Spleen (tissue), 13 donors: ENCODE measurements at regions of chr6 and their contacts with region 1.

Region 1: GRCh38 chr6:125956506-125957390 is at the start of gene HINT3:
- DNase-seq: peak; percentile 100
- H3K4me3 ChIP-seq: peak within 1 kb of the TSS; percentile 64 to 91 (median 80)
- H3K27ac ChIP-seq: peak within 1 kb of the TSS; percentile 90 to 99 (median 97)
- H3K4me1 ChIP-seq: peaks cover 9 to 54% (median 36%) of the 10 kb centered on the region in 6 donors
- H3K27me3 ChIP-seq: peaks cover 0 to 9% (median 0%) of the 10 kb centered on the region in 7 donors
- CTCF ChIP-seq: peak; percentile 93 to 99 (median 98)
- POLR2A ChIP-seq: peak in 1 of 3 donors; percentile 37
- total RNA-seq, gene HINT3: 13.4 to 18.6 (median 16.0) TPM

Region 2: GRCh38 chr6:125779924-125780539 is 176.7 kb before region 1 on chr6:
- intact Hi-C with region 1: loop called (anchors 5 kb)
- DNase-seq: peak; percentile 90
- H3K4me3 ChIP-seq: peak overlapping the region; percentile 50 to 83 (median 60)
- H3K27ac ChIP-seq: peak overlapping the region; percentile 93 to 98 (median 96)
- H3K4me1 ChIP-seq: peaks cover 7 to 34% (median 14%) of the 10 kb centered on the region in 6 donors
- H3K27me3 ChIP-seq: no peaks in the 10 kb centered on the region
- CTCF ChIP-seq: peak in 10 of 11 experiments; percentile 38 to 78 (median 58)
- POLR2A ChIP-seq: no peak

Region 3: DNA sequence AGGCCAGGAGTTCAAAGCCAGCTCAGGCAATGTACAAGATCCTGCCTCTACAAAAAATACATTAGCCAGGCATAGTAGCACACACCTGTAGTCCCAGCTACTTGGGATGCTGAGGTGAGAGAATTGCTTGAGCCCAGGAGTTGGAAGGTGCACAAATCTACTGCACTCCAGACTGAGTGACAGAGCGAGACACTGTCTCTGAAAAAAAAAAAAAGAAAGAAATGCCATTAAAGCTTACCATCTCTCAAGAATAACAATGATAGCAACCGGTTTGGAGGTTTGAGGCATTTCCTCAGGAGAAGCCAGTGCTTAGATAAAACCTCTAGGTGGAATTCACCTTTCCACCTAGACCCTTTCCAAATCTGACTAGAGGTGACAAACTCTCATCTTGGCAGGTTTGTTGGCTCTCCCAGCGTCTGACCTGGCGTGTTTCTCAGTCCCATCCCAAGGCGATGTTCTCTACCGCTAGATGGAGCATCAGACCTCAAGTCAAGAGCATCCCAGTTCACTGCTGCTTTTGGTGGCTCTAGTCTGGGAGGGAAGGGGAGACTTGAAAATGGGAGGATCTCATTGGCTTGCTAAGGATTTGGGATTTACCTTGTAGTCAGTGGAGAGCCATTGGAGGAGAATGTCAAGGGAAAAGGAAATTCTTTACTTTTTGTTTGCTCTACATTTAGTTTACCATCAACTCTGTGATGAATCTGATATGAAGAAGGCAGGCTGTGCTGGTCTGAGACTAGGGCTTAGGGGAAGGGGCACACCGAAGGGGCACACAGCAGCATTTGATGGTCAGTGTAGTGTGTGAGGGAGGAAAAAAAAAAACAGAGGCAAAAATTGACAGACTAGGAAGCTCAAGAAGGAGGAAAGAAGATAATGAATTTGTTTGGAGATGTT is 98.1 kb before region 1 on chr6:
- intact Hi-C with region 1: loop called (anchors 10 kb)
- DNase-seq: no peak
- H3K4me3 ChIP-seq: no peak overlapping the region
- H3K27ac ChIP-seq: no peak overlapping the region
- H3K4me1 ChIP-seq: peaks cover 0 to 17% (median 4%) of the 10 kb centered on the region in 6 donors
- H3K27me3 ChIP-seq: no peaks in the 10 kb centered on the region
- CTCF ChIP-seq: peak in 9 of 11 experiments; percentile 16 to 66 (median 51)
- POLR2A ChIP-seq: no peak